ENCODE measurements at regions of chr2 and their contacts with region 1.

Region 1: GRCh38 chr2:210503001-210503623 is 26.6 kb upstream of the LANCL1 start:
- DNase-seq: peak; percentile 49
- ATAC-seq: peak; percentile 45
- H3K4me3 ChIP-seq: peak overlapping the region in 1 of 5 experiments; percentile 15
- H3K4me3 Mint-ChIP-seq: peak overlapping the region; percentile 68
- H3K27ac ChIP-seq: no peak overlapping the region
- H3K27ac Mint-ChIP-seq: no peak overlapping the region
- H3K4me1 ChIP-seq: peaks cover 0 to 5% of the 10 kb centered on the region in 2 donors
- H3K4me1 Mint-ChIP-seq: peaks cover 4% of the 10 kb centered on the region
- H3K27me3 ChIP-seq: peaks cover 0 to 19% (median 4%) of the 10 kb centered on the region in 4 experiments
- H3K27me3 Mint-ChIP-seq: peaks cover 31% of the 10 kb centered on the region
- CTCF ChIP-seq: peak; percentile 99

Region 2: GRCh38 chr2:210233487-210233886 is 269.6 kb before region 1 on chr2:
- CTCF ChIA-PET with region 1: no interaction called
- POLR2A ChIA-PET with region 1: no interaction called
- intact Hi-C with region 1: no loop called
- DNase-seq: no peak
- ATAC-seq: no peak
- H3K4me3 ChIP-seq: no peak overlapping the region
- H3K4me3 Mint-ChIP-seq: no peak overlapping the region
- H3K27ac ChIP-seq: no peak overlapping the region
- H3K27ac Mint-ChIP-seq: no peak overlapping the region
- H3K4me1 ChIP-seq: no peaks in the 10 kb centered on the region
- H3K4me1 Mint-ChIP-seq: no peaks in the 10 kb centered on the region
- H3K27me3 ChIP-seq: peaks cover 0 to 8% (median 0%) of the 10 kb centered on the region in 4 experiments
- H3K27me3 Mint-ChIP-seq: peaks cover 13% of the 10 kb centered on the region
- CTCF ChIP-seq: no peak

Region 3: GRCh38 chr2:210286123-210286680 is 216.9 kb before region 1 on chr2:
- CTCF ChIA-PET with region 1: no interaction called
- POLR2A ChIA-PET with region 1: no interaction called
- intact Hi-C with region 1: no loop called
- DNase-seq: no peak
- ATAC-seq: no peak
- H3K4me3 ChIP-seq: no peak overlapping the region
- H3K4me3 Mint-ChIP-seq: no peak overlapping the region
- H3K27ac ChIP-seq: no peak overlapping the region
- H3K27ac Mint-ChIP-seq: no peak overlapping the region
- H3K4me1 ChIP-seq: no peaks in the 10 kb centered on the region
- H3K4me1 Mint-ChIP-seq: no peaks in the 10 kb centered on the region
- H3K27me3 ChIP-seq: no peaks in the 10 kb centered on the region
- H3K27me3 Mint-ChIP-seq: no peaks in the 10 kb centered on the region
- CTCF ChIP-seq: no peak

Region 4: GRCh38 chr2:210523650-210524289 is 20.7 kb after region 1 on chr2:
- CTCF ChIA-PET with region 1: interaction called, 11 read pairs
- POLR2A ChIA-PET with region 1: no interaction called
- intact Hi-C with region 1: no loop called
- DNase-seq: no peak
- ATAC-seq: no peak
- H3K4me3 ChIP-seq: no peak overlapping the region
- H3K4me3 Mint-ChIP-seq: no peak overlapping the region
- H3K27ac ChIP-seq: no peak overlapping the region
- H3K27ac Mint-ChIP-seq: no peak overlapping the region
- H3K4me1 ChIP-seq: no peaks in the 10 kb centered on the region
- H3K4me1 Mint-ChIP-seq: no peaks in the 10 kb centered on the region
- H3K27me3 ChIP-seq: peaks cover 0 to 10% (median 0%) of the 10 kb centered on the region in 4 experiments
- H3K27me3 Mint-ChIP-seq: peaks cover 26% of the 10 kb centered on the region
- CTCF ChIP-seq: no peak

Measured in B cell (primary cell).